ENCODE measurements at regions of chr14 and their contacts with region 1.

Region 1: GRCh38 chr14:95850417-95850816 is 26.2 kb upstream of the TUNAR start:
- DNase-seq: no peak
- H3K4me3 ChIP-seq: no peak overlapping the region
- H3K27ac ChIP-seq: no peak overlapping the region
- H3K4me1 ChIP-seq: no peaks in the 10 kb centered on the region
- H3K27me3 ChIP-seq: no peaks in the 10 kb centered on the region
- CTCF ChIP-seq: no peak

Region 2: DNA sequence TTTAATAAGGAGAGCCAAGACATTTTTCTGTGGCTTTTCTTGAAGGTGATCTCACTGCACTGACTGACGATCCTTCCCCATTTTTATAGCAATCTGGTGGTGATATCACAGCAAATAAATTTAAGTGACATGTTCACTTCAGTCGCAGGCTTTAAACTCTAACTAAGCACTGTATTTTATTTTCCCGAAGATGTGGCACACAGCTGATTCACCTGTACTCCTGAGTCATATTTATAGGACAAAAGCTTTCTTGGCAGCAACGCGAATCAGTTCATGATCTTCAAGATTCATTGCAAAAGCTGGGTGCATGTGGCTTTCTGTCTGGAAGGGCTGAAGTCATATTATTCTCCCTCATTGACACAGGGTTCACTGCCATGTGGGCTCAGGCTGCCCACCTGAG is 53.6 kb before region 1 on chr14:
- CTCF ChIA-PET with region 1: no interaction called
- dilution Hi-C with region 1: no loop called
- in situ Hi-C with region 1: no loop called
- intact Hi-C with region 1: no loop called
- DNase-seq: peak; percentile 3
- H3K4me3 ChIP-seq: no peak overlapping the region
- H3K27ac ChIP-seq: no peak overlapping the region
- H3K4me1 ChIP-seq: no peaks in the 10 kb centered on the region
- H3K27me3 ChIP-seq: peaks cover 3% of the 10 kb centered on the region
- CTCF ChIP-seq: no peak

Region 3: GRCh38 chr14:95808371-95808770 is 42.0 kb before region 1 on chr14:
- CTCF ChIA-PET with region 1: no interaction called
- dilution Hi-C with region 1: loop called (anchors 5 kb)
- in situ Hi-C with region 1: no loop called
- intact Hi-C with region 1: no loop called
- DNase-seq: no peak
- H3K4me3 ChIP-seq: no peak overlapping the region
- H3K27ac ChIP-seq: no peak overlapping the region
- H3K4me1 ChIP-seq: no peaks in the 10 kb centered on the region
- H3K27me3 ChIP-seq: no peaks in the 10 kb centered on the region
- CTCF ChIP-seq: no peak

Region 4: GRCh38 chr14:95830386-95830785 is 20.0 kb before region 1 on chr14:
- CTCF ChIA-PET with region 1: no interaction called
- dilution Hi-C with region 1: no loop called
- in situ Hi-C with region 1: no loop called
- intact Hi-C with region 1: no loop called
- DNase-seq: no peak
- H3K4me3 ChIP-seq: no peak overlapping the region
- H3K27ac ChIP-seq: no peak overlapping the region
- H3K4me1 ChIP-seq: no peaks in the 10 kb centered on the region
- H3K27me3 ChIP-seq: no peaks in the 10 kb centered on the region
- CTCF ChIP-seq: no peak

Region 5: DNA sequence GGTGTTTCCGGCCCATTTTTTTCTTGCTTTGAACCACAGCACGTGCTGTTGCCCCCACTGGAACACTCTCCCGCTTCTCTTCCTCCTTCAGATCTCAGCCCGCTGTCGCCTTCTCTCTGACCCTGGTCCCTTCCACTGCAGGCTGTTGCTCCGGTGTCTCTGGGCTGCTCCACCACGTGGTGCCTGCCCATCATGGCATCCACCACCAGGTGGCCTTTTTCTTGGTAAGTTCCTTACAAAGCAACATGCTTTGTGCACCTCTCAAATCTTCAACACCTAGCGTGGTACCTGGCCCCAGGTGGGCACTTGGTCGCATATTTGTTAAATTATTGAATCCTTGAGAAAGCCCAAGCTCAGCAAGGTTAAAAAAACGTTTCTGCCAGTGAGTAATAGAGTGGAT is 45.3 kb after region 1 on chr14:
- CTCF ChIA-PET with region 1: no interaction called
- dilution Hi-C with region 1: loop called (anchors 5 kb)
- in situ Hi-C with region 1: no loop called
- intact Hi-C with region 1: no loop called
- DNase-seq: no peak
- H3K4me3 ChIP-seq: no peak overlapping the region
- H3K27ac ChIP-seq: no peak overlapping the region
- H3K4me1 ChIP-seq: no peaks in the 10 kb centered on the region
- H3K27me3 ChIP-seq: no peaks in the 10 kb centered on the region
- CTCF ChIP-seq: peak; percentile 21 to 35

Region 6: GRCh38 chr14:95979339-95980042 is 129.1 kb after region 1 on chr14:
- CTCF ChIA-PET with region 1: no interaction called
- dilution Hi-C with region 1: no loop called
- in situ Hi-C with region 1: no loop called
- intact Hi-C with region 1: no loop called
- DNase-seq: no peak
- H3K4me3 ChIP-seq: no peak overlapping the region
- H3K27ac ChIP-seq: no peak overlapping the region
- H3K4me1 ChIP-seq: no peaks in the 10 kb centered on the region
- H3K27me3 ChIP-seq: no peaks in the 10 kb centered on the region
- CTCF ChIP-seq: peak; percentile 5 to 11

Measured in mammary epithelial cell (primary cell).